ENCODE measurements at regions of chr10 and their contacts with region 1.

Region 1: GRCh38 chr10:100267237-100268104 is at the start of gene CWF19L1:
- DNase-seq: peak; percentile 39 to 74 (median 64)
- ATAC-seq: peak; percentile 91
- H3K4me3 ChIP-seq: peak within 1 kb of the TSS; percentile 93
- H3K4me3 Mint-ChIP-seq: peak within 1 kb of the TSS; percentile 89 to 100 (median 100)
- H3K27ac ChIP-seq: peak within 1 kb of the TSS; percentile 96
- H3K27ac Mint-ChIP-seq: peak within 1 kb of the TSS; percentile 95 to 100 (median 99)
- H3K4me1 ChIP-seq: peaks cover 12 to 21% of the 10 kb centered on the region in 2 donors
- H3K4me1 Mint-ChIP-seq: peaks cover 17 to 40% (median 27%) of the 10 kb centered on the region in 7 donors
- H3K27me3 ChIP-seq: no peaks in the 10 kb centered on the region
- H3K27me3 Mint-ChIP-seq: no peaks in the 10 kb centered on the region
- total RNA-seq, gene CWF19L1: 41.8 to 46.8 (median 42.6) TPM

Region 2: DNA sequence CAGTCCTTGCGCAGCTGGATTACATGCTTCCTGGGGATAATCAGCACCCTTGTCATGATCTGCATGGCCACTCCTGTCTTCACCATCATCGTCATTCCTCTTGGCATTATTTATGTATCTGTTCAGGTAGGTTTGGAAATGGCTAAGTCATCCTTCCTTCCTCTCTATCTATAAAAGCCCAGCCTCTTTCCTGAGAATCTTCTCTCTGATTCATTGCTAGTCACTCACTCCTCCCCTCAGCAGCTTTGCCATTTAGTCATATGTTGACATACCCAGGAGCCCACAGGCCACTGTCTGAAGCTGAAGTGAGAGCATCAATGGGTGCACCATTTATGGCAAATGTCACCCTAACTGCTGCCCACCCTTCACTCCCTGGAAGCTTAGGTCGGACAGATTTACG is 433.1 kb before region 1 on chr10:
- CTCF ChIA-PET with region 1: no interaction called
- POLR2A ChIA-PET with region 1: no interaction called
- intact Hi-C with region 1: no loop called
- DNase-seq: no peak
- ATAC-seq: no peak
- H3K4me3 ChIP-seq: no peak overlapping the region
- H3K4me3 Mint-ChIP-seq: no peak overlapping the region
- H3K27ac ChIP-seq: no peak overlapping the region
- H3K27ac Mint-ChIP-seq: no peak overlapping the region
- H3K4me1 ChIP-seq: no peaks in the 10 kb centered on the region
- H3K4me1 Mint-ChIP-seq: peaks cover 0 to 1% (median 0%) of the 10 kb centered on the region in 7 donors
- H3K27me3 ChIP-seq: no peaks in the 10 kb centered on the region
- H3K27me3 Mint-ChIP-seq: no peaks in the 10 kb centered on the region

Region 3: DNA sequence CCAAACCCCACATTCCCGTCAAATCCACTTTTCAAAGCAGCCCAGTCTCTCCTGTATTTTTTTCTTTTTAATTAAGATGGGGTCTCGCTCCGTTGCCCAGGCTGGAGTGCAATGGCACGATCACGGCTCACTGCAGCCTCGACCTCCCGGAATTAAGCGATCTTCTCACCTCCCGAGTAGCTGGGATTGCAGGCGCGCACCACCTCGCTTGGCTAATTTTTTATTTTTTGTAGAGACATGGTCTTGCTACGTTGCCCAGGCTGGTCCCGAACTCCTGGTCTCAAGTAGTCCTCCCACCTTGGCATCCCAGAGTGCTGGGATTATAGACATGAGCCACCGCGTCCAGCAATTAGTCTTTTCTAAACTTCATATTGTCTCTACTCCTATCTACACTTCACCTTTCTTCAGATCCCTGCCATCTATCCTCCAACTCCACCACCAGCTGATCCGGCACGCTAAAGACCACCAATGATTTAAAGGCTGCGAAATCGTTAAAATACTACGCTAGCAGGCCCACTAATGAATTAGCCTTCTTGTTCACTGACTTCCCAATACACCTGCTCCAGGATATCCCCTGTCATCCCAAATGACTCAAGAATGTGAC is 37.5 kb before region 1 on chr10:
- CTCF ChIA-PET with region 1: no interaction called
- POLR2A ChIA-PET with region 1: interaction called, 3 read pairs
- intact Hi-C with region 1: loop called (anchors 1 kb)
- DNase-seq: no peak
- ATAC-seq: no peak
- H3K4me3 ChIP-seq: peak overlapping the region; percentile 99
- H3K4me3 Mint-ChIP-seq: peak overlapping the region; percentile 85 to 98 (median 91)
- H3K27ac ChIP-seq: peak overlapping the region; percentile 83
- H3K27ac Mint-ChIP-seq: peak overlapping the region; percentile 75 to 97 (median 85)
- H3K4me1 ChIP-seq: peaks cover 0 to 8% of the 10 kb centered on the region in 2 donors
- H3K4me1 Mint-ChIP-seq: peaks cover 16 to 44% (median 36%) of the 10 kb centered on the region in 7 donors
- H3K27me3 ChIP-seq: no peaks in the 10 kb centered on the region
- H3K27me3 Mint-ChIP-seq: no peaks in the 10 kb centered on the region

Region 4: DNA sequence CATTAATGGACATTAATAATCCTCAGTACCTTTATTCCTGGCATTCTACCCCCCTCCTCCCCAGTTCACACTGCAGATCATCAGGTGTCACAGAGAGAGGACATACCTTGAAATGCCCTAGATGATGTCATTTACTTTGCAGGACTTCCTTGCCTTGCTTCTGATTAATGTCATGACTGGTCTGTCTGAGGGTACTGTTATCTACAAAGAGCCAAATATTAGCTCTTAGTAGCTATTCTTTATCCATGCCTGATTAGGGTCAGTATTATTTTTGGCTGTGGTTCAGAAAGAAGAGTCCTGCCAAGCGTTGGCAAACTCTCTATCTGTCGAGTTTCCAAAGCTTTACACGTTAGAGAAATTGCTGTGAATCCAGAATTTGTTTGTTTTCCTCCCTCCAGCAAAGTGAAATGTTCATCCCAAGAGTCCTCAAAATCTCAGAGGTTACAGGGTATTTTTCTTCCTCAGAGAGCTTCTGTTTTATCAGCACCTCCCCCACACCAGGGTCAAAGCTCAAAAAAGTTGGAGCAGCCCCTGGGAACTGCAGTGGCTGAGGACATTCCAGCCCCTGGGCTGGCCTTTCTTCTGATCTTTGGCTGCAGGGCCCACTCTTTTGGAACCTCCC is 92.2 kb after region 1 on chr10:
- CTCF ChIA-PET with region 1: no interaction called
- POLR2A ChIA-PET with region 1: no interaction called
- intact Hi-C with region 1: no loop called
- DNase-seq: no peak
- ATAC-seq: no peak
- H3K4me3 ChIP-seq: no peak overlapping the region
- H3K4me3 Mint-ChIP-seq: peak overlapping the region in 2 of 10 donors; percentile 24 to 38
- H3K27ac ChIP-seq: no peak overlapping the region
- H3K27ac Mint-ChIP-seq: peak overlapping the region in 6 of 9 donors; percentile 8 to 80 (median 65)
- H3K4me1 ChIP-seq: peaks cover 0 to 6% of the 10 kb centered on the region in 2 donors
- H3K4me1 Mint-ChIP-seq: peaks cover 8 to 74% (median 14%) of the 10 kb centered on the region in 7 donors
- H3K27me3 ChIP-seq: no peaks in the 10 kb centered on the region
- H3K27me3 Mint-ChIP-seq: no peaks in the 10 kb centered on the region

Region 5: DNA sequence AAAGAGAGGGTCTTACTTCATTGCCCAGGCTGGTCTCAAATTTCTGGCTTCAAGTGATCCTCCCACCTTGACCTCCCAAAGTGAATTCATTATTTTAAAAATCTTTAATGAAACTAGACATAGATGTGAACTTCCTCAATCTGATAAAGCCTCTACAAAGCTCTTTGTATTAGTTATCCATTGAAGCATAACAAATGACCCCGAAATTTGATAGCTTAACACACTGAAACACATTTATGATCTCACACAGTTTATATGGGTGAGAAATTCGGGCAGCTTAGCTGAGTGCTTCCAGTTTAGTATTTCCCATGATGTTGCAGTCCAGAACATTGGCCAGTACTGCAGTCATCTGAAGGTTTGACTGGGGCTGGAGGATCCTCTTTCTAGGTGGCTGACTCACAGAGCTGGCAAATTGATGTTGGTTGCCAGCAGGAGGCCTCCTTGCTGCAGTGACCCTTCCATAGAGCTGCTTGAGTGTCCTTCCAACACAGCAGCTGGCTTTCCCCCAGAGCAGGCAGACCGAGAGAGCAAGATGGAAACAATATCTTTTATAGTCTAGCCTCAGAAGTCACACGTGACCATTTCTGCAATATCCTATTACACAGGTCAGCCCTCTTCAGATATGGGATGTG is 178.8 kb after region 1 on chr10:
- CTCF ChIA-PET with region 1: no interaction called
- POLR2A ChIA-PET with region 1: no interaction called
- intact Hi-C with region 1: no loop called
- DNase-seq: no peak
- ATAC-seq: no peak
- H3K4me3 ChIP-seq: no peak overlapping the region
- H3K4me3 Mint-ChIP-seq: no peak overlapping the region
- H3K27ac ChIP-seq: no peak overlapping the region
- H3K27ac Mint-ChIP-seq: no peak overlapping the region
- H3K4me1 ChIP-seq: no peaks in the 10 kb centered on the region
- H3K4me1 Mint-ChIP-seq: no peaks in the 10 kb centered on the region
- H3K27me3 ChIP-seq: no peaks in the 10 kb centered on the region
- H3K27me3 Mint-ChIP-seq: no peaks in the 10 kb centered on the region

Measured in naive thymus-derived CD4-positive, alpha-beta T cell (primary cell).